H1 (cell line): ENCODE measurements at regions of chr3 and their contacts with region 1.

Region 1: DNA sequence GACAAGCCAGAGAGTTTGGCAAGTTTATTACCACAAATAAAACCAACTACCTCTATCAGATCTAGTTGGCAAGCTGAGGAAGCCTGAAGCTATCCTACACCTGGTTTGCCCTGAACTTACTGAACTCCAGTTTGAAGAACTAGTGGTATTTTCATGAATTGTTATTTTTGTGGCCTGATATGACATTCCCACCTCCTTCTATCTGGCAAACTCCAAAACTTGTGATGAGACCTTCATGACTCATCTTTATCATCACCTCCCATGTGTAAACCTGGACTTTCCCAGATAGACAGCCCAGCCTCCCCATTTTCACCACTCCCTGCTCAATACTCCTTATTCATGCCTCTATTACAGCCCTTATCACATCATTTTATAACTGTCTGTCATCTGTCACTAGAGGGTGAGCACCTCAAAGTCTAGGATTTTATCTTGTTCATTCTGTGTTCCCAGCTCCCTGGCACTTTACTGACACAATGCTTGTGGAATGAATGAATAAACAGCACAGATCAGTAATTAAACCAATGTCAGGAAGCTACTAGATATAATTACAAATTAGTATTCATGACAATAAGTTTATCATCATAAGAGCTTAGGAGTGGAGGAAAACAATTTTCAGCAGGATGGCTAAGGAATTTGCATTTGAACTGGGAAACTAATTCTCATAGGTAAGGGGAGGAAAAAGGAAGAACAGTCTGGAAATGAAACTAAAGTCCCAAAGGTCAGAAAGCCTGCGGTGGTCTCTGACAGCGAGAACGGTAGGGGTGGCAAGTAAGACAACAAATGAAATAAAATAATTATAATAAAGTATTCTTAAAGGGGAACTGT is 13.2 kb upstream of the TRANK1 start:
- DNase-seq: no peak
- H3K4me3 ChIP-seq: no peak overlapping the region
- H3K27ac ChIP-seq: no peak overlapping the region
- H3K4me1 ChIP-seq: peaks cover 0 to 2% (median 0%) of the 10 kb centered on the region in 4 experiments; a peak in 2 of 7 replicates
- H3K27me3 ChIP-seq: no peaks in the 10 kb centered on the region
- CTCF ChIP-seq: no peak
- EP300 ChIP-seq: no peak
- POLR2A ChIP-seq: no peak
- RAD21 ChIP-seq: no peak

Region 2: DNA sequence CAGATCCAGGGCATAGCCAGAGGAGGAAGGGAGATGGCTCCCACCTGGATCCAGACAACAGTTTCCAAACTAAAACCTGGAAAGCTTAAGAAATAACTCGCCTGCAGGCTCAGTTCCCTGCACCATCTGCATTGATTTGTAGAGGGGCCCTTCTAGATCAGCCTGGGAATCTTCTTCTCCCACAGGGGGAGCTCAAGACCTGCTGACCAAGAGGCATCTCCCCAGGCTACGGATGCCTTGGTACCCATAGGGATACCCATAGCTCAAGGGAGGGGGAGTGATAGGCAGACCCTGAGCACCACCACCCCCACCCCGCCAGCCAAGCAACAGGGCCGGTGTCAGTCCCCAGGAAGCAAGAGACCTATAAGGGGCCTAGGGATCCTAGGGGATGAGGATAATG is 165.7 kb before region 1 on chr3:
- CTCF ChIA-PET with region 1: interaction called, 13 read pairs
- POLR2A ChIA-PET with region 1: no interaction called
- DNase-seq: peak; percentile 29 to 66
- H3K4me3 ChIP-seq: no peak overlapping the region
- H3K27ac ChIP-seq: no peak overlapping the region
- H3K4me1 ChIP-seq: no peaks in the 10 kb centered on the region
- H3K27me3 ChIP-seq: no peaks in the 10 kb centered on the region
- CTCF ChIP-seq: peak; percentile 73 to 91 (median 82)
- EP300 ChIP-seq: no peak
- POLR2A ChIP-seq: no peak
- RAD21 ChIP-seq: peak; percentile 90 to 95

Region 3: DNA sequence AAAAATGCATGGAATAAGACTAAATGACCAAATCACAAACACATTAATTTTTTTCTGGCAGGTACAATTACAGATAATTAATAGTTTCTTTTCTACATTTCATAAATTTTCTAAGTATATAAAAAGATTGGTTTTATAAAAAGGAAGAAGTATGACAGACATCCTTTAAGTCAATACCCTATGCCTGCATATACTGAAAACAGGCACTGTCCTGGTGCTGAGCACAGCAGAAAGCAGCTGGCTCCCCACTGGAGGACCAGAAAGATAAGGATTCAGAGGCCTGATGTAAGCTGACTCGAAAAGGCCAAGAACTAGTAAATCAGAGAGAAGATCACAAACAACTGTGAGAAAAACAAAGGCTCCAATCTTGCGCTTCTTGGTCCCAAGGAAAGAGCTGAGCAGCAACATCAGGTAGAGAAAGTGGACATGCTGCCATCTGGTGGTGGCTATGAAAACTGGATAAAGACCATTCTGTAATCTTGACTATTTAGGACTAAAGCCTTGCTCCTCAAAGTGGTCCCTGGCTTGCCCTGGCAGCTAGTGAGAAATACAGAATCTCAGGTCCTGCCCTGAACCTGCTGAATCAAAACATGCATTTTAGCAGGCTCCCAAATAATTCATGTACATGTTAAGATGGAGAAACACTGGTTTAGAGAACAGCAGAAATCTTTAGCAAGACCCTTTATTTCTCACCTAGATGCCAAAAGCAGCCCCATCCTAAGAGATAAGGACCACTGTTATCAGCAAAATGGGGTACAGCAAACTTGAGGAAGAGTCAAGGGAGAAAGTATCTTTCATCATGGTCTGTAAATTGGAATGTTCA is 89.2 kb before region 1 on chr3:
- CTCF ChIA-PET with region 1: interaction called, 53 read pairs
- POLR2A ChIA-PET with region 1: interaction called, 3 read pairs
- DNase-seq: peak; percentile 23 to 67
- H3K4me3 ChIP-seq: no peak overlapping the region
- H3K27ac ChIP-seq: no peak overlapping the region
- H3K4me1 ChIP-seq: peaks cover 0 to 3% (median 0%) of the 10 kb centered on the region in 4 experiments; a peak in 1 of 7 replicates
- H3K27me3 ChIP-seq: no peaks in the 10 kb centered on the region
- CTCF ChIP-seq: peak; percentile 8 to 88 (median 87)
- EP300 ChIP-seq: no peak
- POLR2A ChIP-seq: no peak
- RAD21 ChIP-seq: peak; percentile 89

Region 4: DNA sequence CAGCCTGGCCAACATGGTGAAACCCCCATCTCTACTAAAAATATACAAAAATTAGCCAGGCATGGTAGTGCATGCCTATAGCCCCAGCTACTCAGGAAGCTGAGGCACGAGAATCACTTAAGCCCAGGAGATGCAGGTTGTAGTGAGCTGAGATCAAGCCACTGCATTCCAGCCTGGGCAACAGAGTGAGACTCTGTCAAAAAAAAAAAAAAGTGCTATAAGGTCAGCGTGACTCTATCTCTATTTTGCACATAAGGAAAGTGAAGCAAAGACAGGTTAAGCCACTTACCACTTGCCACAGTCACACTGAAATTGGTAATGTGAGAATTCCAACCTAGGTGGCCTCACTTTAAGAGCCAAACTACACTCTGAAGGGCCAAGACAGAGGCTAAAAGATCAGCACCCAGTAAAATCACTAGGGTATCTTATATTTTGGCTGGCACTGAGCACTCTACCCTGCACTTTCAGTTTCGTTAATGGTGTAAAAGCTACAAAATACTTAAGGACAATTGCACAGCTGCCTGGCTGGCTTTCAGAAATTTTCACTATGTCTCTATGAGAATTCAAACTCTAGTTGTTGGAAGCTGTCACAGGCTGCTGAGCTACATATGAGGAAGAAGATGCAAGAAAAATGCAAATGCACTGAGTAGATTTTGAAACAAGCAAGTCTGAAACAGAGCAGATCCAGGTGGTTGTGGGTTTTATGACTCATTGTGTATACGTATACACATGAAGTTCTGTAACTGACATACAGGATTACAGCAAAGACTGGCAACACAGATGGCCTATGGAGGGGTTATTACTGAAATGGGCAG is 45.9 kb before region 1 on chr3:
- CTCF ChIA-PET with region 1: interaction called, 125 read pairs
- POLR2A ChIA-PET with region 1: no interaction called
- DNase-seq: no peak
- H3K4me3 ChIP-seq: no peak overlapping the region
- H3K27ac ChIP-seq: no peak overlapping the region
- H3K4me1 ChIP-seq: no peaks in the 10 kb centered on the region
- H3K27me3 ChIP-seq: no peaks in the 10 kb centered on the region
- CTCF ChIP-seq: no peak
- EP300 ChIP-seq: no peak
- POLR2A ChIP-seq: no peak
- RAD21 ChIP-seq: no peak

Region 5: GRCh38 chr3:36923523-36923943 is 34.5 kb before region 1 on chr3:
- CTCF ChIA-PET with region 1: interaction called, 62 read pairs
- POLR2A ChIA-PET with region 1: interaction called, 4 read pairs
- DNase-seq: peak in 1 of 2 experiments; percentile 78
- H3K4me3 ChIP-seq: no peak overlapping the region
- H3K27ac ChIP-seq: no peak overlapping the region
- H3K4me1 ChIP-seq: peaks cover 0 to 4% (median 0%) of the 10 kb centered on the region in 4 experiments; a peak in 1 of 7 replicates
- H3K27me3 ChIP-seq: no peaks in the 10 kb centered on the region
- CTCF ChIP-seq: peak; percentile 60 to 64 (median 63)
- EP300 ChIP-seq: no peak
- POLR2A ChIP-seq: no peak
- RAD21 ChIP-seq: peak; percentile 15 to 45; a peak in 3 of 4 replicates

Region 6: DNA sequence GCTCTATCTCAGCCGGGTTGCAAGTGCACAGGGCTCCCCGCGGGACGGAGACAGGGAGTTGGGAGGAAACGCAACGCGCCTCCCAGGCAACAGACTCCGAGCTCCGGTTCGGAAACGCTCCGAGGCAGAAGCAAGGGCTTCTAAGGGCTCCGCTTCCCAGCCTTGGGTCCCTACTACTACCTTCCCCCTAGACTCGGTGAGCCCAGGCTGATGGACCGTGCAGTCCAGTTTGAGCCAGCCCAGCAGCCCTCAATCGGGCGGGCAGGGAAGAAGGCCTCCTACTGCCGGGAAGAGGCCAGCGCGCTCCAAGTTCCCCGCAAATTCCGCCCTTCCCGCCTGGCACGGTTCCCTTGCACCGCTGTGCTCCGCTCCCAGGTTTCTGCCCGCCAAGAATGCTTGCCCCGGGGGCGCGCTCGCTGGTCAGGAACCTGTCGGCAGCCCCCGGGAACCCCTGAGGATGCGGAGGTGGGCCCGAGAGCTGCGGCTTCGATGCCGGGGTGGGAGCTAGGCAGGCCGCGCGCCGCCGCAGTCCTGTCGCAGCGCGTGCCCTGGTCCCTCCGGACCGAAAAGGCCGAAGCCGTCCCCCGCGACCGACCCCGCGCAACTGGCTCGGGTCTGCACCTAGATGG is 13.9 kb before region 1 on chr3:
- CTCF ChIA-PET with region 1: interaction called, 66 read pairs
- POLR2A ChIA-PET with region 1: interaction called, 25 read pairs
- DNase-seq: no peak
- H3K4me3 ChIP-seq: peak overlapping the region; percentile 53 to 64 (median 59)
- H3K27ac ChIP-seq: no peak overlapping the region
- H3K4me1 ChIP-seq: peaks cover 0 to 10% (median 1%) of the 10 kb centered on the region in 4 experiments; a peak in 4 of 7 replicates
- H3K27me3 ChIP-seq: peaks cover 4 to 28% (median 19%) of the 10 kb centered on the region in 4 experiments
- CTCF ChIP-seq: peak in 1 of 3 experiments; percentile 1; a peak in 1 of 4 replicates
- EP300 ChIP-seq: no peak
- POLR2A ChIP-seq: peak in 1 of 2 experiments; percentile 13; a peak in 1 of 3 replicates
- RAD21 ChIP-seq: no peak

Region 7: GRCh38 chr3:36993326-36994283 is 35.5 kb after region 1 on chr3 and contains the start of gene MLH1:
- CTCF ChIA-PET with region 1: interaction called, 33 read pairs
- POLR2A ChIA-PET with region 1: interaction called, 14 read pairs
- DNase-seq: peak; percentile 53 to 95
- H3K4me3 ChIP-seq: peak within 1 kb of the TSS; percentile 58 to 93 (median 90)
- H3K27ac ChIP-seq: peak within 1 kb of the TSS; percentile 96
- H3K4me1 ChIP-seq: peaks cover 0 to 2% (median 0%) of the 10 kb centered on the region in 4 experiments; a peak in 3 of 7 replicates
- H3K27me3 ChIP-seq: no peaks in the 10 kb centered on the region
- CTCF ChIP-seq: no peak
- EP300 ChIP-seq: no peak
- POLR2A ChIP-seq: peak in 1 of 2 experiments; percentile 32; a peak in 2 of 3 replicates
- RAD21 ChIP-seq: no peak
- total RNA-seq, gene MLH1: 47.3 and 51.1 TPM in 2 replicates

Region 8: GRCh38 chr3:37093481-37093880 is 135.4 kb after region 1 on chr3:
- CTCF ChIA-PET with region 1: no interaction called
- POLR2A ChIA-PET with region 1: no interaction called
- DNase-seq: no peak
- H3K4me3 ChIP-seq: no peak overlapping the region
- H3K27ac ChIP-seq: no peak overlapping the region
- H3K4me1 ChIP-seq: no peaks in the 10 kb centered on the region
- H3K27me3 ChIP-seq: no peaks in the 10 kb centered on the region
- CTCF ChIP-seq: no peak
- EP300 ChIP-seq: no peak
- POLR2A ChIP-seq: no peak
- RAD21 ChIP-seq: no peak